Mammary epithelial cell (primary cell): ENCODE measurements at regions of chr13 and their contacts with region 1.

Region 1: DNA sequence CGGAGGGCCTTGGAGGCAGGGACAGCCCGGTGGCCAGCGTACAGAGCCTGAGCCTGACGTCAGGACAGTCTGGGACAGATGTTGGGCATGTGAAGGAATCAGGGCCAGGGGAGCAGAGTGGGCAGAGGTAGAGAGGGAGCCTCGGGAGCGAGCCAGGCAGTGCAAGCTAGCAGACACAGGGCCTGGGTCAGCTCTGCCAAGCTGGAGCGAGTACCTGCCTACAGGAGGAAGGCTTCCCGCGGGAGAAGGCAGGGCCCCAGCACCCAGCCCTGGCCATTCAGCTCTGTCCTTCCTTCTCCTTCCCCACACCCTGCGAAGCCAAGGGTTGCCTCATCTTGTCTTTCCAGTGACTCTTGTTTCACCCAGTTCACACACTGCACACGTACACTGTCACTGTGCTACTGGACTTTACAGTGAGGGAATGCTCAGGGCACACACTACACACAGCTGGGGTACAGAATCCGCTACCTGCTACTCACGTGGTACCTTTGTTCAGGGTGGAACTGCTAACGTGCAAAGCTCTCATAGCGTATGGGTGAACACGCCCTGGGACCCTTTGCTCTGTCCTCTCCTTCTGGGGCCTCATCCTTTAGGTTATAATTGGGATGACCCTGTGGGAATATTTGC is 9.8 kb upstream of the C1QTNF9 start:
- DNase-seq: no peak
- H3K4me3 ChIP-seq: no peak overlapping the region
- H3K27ac ChIP-seq: no peak overlapping the region
- H3K4me1 ChIP-seq: no peaks in the 10 kb centered on the region
- H3K27me3 ChIP-seq: no peaks in the 10 kb centered on the region
- CTCF ChIP-seq: no peak

Region 2: GRCh38 chr13:24741016-24741662 is 441.5 kb after region 1 on chr13:
- CTCF ChIA-PET with region 1: no interaction called
- dilution Hi-C with region 1: loop called (anchors 5 kb)
- in situ Hi-C with region 1: no loop called
- intact Hi-C with region 1: no loop called
- DNase-seq: no peak
- H3K4me3 ChIP-seq: no peak overlapping the region
- H3K27ac ChIP-seq: no peak overlapping the region
- H3K4me1 ChIP-seq: peaks cover 3% of the 10 kb centered on the region
- H3K27me3 ChIP-seq: peaks cover 9% of the 10 kb centered on the region
- CTCF ChIP-seq: peak; percentile 16 to 53

Region 3: GRCh38 chr13:25752957-25753551 is 1453.5 kb after region 1 on chr13:
- CTCF ChIA-PET with region 1: no interaction called
- dilution Hi-C with region 1: no loop called
- in situ Hi-C with region 1: no loop called
- intact Hi-C with region 1: no loop called
- DNase-seq: peak; percentile 74
- H3K4me3 ChIP-seq: no peak overlapping the region
- H3K27ac ChIP-seq: no peak overlapping the region
- H3K4me1 ChIP-seq: peaks cover 15% of the 10 kb centered on the region
- H3K27me3 ChIP-seq: no peaks in the 10 kb centered on the region
- CTCF ChIP-seq: no peak